Naive thymus-derived CD4-positive, alpha-beta T cell (primary cell): ENCODE measurements at regions of chr7 and their contacts with region 1.

Region 1: GRCh38 chr7:50068961-50069551 is 24.0 kb downstream of the ZPBP start:
- DNase-seq: peak in 6 of 9 donors; percentile 36 to 65 (median 52)
- ATAC-seq: peak; percentile 71
- H3K4me3 ChIP-seq: peak overlapping the region; percentile 72
- H3K4me3 Mint-ChIP-seq: peak overlapping the region; percentile 82 to 97 (median 90)
- H3K27ac ChIP-seq: peak overlapping the region; percentile 69
- H3K27ac Mint-ChIP-seq: peak overlapping the region; percentile 87 to 99 (median 96)
- H3K4me1 ChIP-seq: peaks cover 8 to 14% of the 10 kb centered on the region in 2 donors
- H3K4me1 Mint-ChIP-seq: peaks cover 12 to 30% (median 26%) of the 10 kb centered on the region in 7 donors
- H3K27me3 ChIP-seq: no peaks in the 10 kb centered on the region
- H3K27me3 Mint-ChIP-seq: peaks cover 0 to 10% (median 5%) of the 10 kb centered on the region in 5 donors

Region 2: GRCh38 chr7:48595756-48596155 is 1473.3 kb before region 1 on chr7:
- CTCF ChIA-PET with region 1: no interaction called
- POLR2A ChIA-PET with region 1: no interaction called
- intact Hi-C with region 1: no loop called
- DNase-seq: no peak
- ATAC-seq: no peak
- H3K4me3 ChIP-seq: no peak overlapping the region
- H3K4me3 Mint-ChIP-seq: no peak overlapping the region
- H3K27ac ChIP-seq: no peak overlapping the region
- H3K27ac Mint-ChIP-seq: no peak overlapping the region
- H3K4me1 ChIP-seq: no peaks in the 10 kb centered on the region
- H3K4me1 Mint-ChIP-seq: no peaks in the 10 kb centered on the region
- H3K27me3 ChIP-seq: no peaks in the 10 kb centered on the region
- H3K27me3 Mint-ChIP-seq: no peaks in the 10 kb centered on the region

Region 3: GRCh38 chr7:50449881-50450589 is 381.0 kb after region 1 on chr7 and contains the start of gene FIGNL1:
- CTCF ChIA-PET with region 1: no interaction called
- POLR2A ChIA-PET with region 1: interaction called, 3 read pairs
- intact Hi-C with region 1: loop called in 1 of 2 experiments (anchors 1 kb)
- DNase-seq: peak; percentile 61 to 87 (median 84)
- ATAC-seq: peak; percentile 98
- H3K4me3 ChIP-seq: peak within 1 kb of the TSS; percentile 63
- H3K4me3 Mint-ChIP-seq: peak within 1 kb of the TSS; percentile 91 to 96 (median 94)
- H3K27ac ChIP-seq: peak within 1 kb of the TSS; percentile 94
- H3K27ac Mint-ChIP-seq: peak within 1 kb of the TSS; percentile 92 to 99 (median 96)
- H3K4me1 ChIP-seq: peaks cover 13 to 14% of the 10 kb centered on the region in 2 donors
- H3K4me1 Mint-ChIP-seq: peaks cover 14 to 43% (median 29%) of the 10 kb centered on the region in 7 donors
- H3K27me3 ChIP-seq: no peaks in the 10 kb centered on the region
- H3K27me3 Mint-ChIP-seq: peaks cover 0 to 11% (median 0%) of the 10 kb centered on the region in 5 donors
- total RNA-seq, gene FIGNL1: 7.7 to 30.2 (median 14.3) TPM